SK-N-SH (cell line): ENCODE measurements at regions of chr2 and their contacts with region 1.

Region 1: DNA sequence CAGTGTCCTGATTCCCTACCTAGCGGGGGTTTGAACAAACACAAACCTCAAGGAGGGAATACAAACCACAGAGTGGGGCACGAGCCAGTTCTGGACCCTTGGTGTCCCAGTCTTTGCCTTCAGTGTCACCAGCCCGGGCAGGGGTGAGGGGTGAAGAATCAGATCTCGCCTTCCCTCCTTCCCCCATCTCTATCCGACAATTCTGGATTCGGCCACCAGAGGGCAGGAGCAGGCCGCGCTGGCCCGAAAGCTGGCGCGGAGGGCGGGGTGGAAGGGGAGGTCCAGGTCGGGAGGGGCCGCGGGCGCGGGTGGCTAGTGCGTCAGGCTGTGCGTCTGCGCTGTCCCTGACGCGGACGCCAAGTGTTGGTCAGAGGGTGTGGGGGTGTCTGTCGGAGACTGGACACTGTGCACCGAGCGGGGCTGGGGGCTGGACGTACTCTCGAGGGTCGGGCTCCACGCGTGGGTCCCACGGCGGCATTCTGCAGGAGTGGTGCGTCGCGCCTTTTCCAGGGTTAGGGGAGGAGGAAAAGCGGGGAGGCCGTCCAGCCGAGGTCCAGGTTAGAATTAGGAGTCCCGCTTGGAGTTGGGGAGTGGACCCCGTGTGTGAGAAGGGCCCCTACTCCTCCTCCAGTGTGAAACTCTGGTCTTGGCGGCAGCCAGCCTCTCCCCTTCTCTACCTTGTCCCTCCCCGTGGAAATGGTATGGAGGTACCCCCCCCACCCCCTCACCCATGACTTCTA is 2.9 kb upstream of the CRYBA2 start:
- DNase-seq: peak; percentile 96
- H3K4me3 ChIP-seq: peak overlapping the region; percentile 57 to 61
- H3K27ac ChIP-seq: peak overlapping the region in 1 of 2 experiments; percentile 99; a peak in 2 of 4 replicates
- H3K4me1 ChIP-seq: peaks cover 0 to 61% of the 10 kb centered on the region in 2 experiments; a peak in 2 of 4 replicates
- H3K27me3 ChIP-seq: no peaks in the 10 kb centered on the region
- CTCF ChIP-seq: peak; percentile 85
- EP300 ChIP-seq: 0 out of 4 replicates have a peak, but pooled peaks of 1 of the 2 experiments have one; percentile 24
- RAD21 ChIP-seq: peak; percentile 96

Region 2: DNA sequence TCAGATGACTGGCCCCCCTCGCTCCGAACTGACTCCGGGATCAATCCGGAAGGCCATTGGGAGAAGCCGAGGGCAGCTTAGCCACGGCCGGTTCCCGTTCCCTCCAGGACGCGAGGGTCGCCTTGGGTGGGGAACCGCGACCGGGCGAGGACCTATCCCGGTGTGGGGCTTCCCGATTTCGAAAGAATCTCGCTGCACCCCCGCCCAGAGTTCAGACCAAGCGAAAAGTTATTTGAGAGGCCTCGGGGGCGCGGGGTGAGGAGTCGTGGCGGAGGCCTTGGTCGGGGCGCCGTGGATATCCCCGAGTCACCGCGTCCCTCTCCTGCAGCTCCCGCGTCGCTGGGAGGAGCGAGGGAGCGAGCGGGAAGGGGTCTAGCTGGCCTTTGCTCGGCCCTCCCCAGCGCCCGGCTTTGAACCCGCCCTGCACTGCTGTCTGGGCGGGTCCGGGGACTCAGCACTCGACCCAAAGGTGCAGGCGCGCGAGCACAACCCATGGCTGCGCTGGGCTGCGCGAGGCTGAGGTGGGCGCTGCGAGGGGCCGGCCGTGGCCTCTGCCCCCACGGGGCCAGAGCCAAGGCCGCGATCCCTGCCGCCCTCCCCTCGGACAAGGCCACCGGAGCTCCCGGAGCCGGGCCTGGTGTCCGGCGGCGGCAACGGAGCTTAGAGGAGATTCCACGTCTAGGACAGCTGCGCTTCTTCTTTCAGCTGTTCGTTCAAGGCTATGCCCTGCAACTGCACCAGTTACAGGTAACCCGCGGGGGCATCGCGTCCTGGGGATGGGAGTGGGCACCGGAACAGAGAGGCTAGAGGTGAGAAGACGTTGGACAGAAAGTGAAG is 214.2 kb before region 1 on chr2 and contains the start of gene CYP27A1:
- CTCF ChIA-PET with region 1: no interaction called
- POLR2A ChIA-PET with region 1: no interaction called
- DNase-seq: peak; percentile 37
- H3K4me3 ChIP-seq: no peak within 1 kb of the TSS
- H3K27ac ChIP-seq: no peak within 1 kb of the TSS
- H3K4me1 ChIP-seq: no peaks in the 10 kb centered on the region; a peak in 1 of 4 replicates
- H3K27me3 ChIP-seq: no peaks in the 10 kb centered on the region
- CTCF ChIP-seq: no peak
- EP300 ChIP-seq: no peak
- RAD21 ChIP-seq: no peak
- polyA plus RNA-seq, gene CYP27A1: 0.18 and 0.54 TPM in 2 replicates

Region 3: DNA sequence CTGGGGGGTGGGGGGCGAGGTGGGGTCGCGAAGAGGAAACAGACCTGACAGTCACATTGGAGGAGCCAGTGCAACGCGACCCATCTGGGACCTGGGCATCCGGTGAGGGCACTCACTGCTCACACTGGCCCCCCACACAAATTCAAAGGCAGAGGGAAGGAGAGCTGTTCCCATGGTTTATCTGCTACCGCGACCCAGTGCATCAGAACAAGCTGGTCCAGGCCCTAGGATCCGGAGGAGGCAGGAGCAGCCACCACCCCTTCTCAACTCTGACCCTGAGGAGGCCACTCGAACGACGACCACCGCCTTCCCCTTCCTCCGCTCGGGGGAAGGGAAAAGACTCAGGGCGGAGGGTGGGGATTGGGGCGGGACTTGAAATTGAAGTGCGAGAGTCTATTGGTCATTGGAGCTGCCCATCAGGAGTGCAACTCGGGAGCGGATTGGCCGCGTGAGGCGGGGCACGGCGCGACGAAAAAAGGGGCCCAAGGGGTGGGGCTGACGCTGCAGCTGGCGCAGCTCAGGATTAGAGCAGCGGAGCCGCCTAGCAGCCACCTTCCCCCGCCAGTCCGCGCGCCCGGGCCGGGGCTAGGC is 36.9 kb before region 1 on chr2 and contains the start of gene CDK5R2:
- CTCF ChIA-PET with region 1: interaction called, 19 read pairs
- POLR2A ChIA-PET with region 1: interaction called, 13 read pairs
- DNase-seq: peak; percentile 98
- H3K4me3 ChIP-seq: peak within 1 kb of the TSS; percentile 60 to 63
- H3K27ac ChIP-seq: peak within 1 kb of the TSS in 1 of 2 experiments; percentile 94; a peak in 2 of 4 replicates
- H3K4me1 ChIP-seq: peaks cover 8 to 47% of the 10 kb centered on the region in 2 experiments; a peak in 2 of 4 replicates
- H3K27me3 ChIP-seq: peaks cover 41% of the 10 kb centered on the region
- CTCF ChIP-seq: no peak
- EP300 ChIP-seq: peak in 1 of 2 experiments; percentile 32; a peak in 1 of 4 replicates
- RAD21 ChIP-seq: no peak
- polyA plus RNA-seq, gene CDK5R2: 0.19 and 0.26 TPM in 2 replicates

Region 4: DNA sequence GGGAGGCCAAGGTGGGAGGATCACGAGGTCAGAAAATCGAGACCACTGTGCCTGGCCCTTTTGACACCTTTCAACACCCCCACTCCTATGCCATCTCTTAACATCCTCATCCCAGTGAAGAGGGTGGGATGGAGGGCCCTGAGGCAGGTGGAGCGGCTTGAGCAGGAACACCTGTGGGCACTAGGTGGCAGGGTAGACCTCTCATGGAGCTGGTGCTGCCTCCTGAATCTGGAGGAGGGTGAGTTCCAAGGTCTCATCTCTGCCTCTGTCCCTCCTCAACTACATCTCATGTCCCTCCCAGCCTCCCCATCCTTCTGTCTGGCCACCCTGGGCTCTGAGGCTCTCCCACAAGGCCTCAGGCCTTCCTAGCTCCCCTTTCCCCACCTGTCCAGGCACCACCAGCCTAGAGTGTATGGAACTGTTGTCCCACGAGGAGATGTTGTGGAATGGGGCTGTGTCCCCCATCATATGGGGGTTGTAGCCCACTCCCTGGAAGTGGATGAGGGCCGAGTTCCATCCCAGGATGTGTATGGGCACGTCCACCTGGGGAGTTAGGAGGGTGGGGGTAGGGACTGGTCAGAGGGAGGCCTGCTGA is 14.1 kb after region 1 on chr2:
- CTCF ChIA-PET with region 1: interaction called, 258 read pairs
- POLR2A ChIA-PET with region 1: no interaction called
- DNase-seq: peak; percentile 64
- H3K4me3 ChIP-seq: no peak overlapping the region
- H3K27ac ChIP-seq: no peak overlapping the region
- H3K4me1 ChIP-seq: no peaks in the 10 kb centered on the region
- H3K27me3 ChIP-seq: no peaks in the 10 kb centered on the region
- CTCF ChIP-seq: peak; percentile 30
- EP300 ChIP-seq: no peak
- RAD21 ChIP-seq: peak; percentile 62

Region 5: DNA sequence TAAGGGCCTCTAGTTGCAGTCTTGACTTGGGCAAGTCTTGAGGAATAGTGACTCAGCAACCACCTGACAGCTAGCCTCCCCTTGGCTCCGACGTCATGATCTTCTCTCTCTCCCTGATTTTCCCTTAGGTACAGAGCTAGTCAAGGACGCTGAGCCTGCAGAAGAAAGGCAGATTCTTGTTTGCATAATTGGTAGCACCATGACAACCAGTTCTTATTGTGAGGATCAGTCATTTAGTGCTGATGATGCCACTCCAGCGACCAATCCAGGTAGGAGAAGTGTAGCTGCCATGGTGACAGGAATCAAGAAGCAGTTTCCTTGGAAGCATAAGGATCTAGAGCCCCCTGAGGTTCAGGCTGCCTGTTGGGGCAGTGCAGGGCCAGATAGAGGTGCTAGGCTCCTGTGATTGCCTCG is 339.2 kb after region 1 on chr2:
- CTCF ChIA-PET with region 1: no interaction called
- POLR2A ChIA-PET with region 1: no interaction called
- DNase-seq: no peak
- H3K4me3 ChIP-seq: no peak overlapping the region
- H3K27ac ChIP-seq: no peak overlapping the region
- H3K4me1 ChIP-seq: no peaks in the 10 kb centered on the region
- H3K27me3 ChIP-seq: peaks cover 10% of the 10 kb centered on the region; the same call in 1 of the 2 replicates
- CTCF ChIP-seq: no peak
- EP300 ChIP-seq: no peak
- RAD21 ChIP-seq: no peak